H1 (cell line): ENCODE measurements at regions of chr12 and their contacts with region 1.

Region 1: DNA sequence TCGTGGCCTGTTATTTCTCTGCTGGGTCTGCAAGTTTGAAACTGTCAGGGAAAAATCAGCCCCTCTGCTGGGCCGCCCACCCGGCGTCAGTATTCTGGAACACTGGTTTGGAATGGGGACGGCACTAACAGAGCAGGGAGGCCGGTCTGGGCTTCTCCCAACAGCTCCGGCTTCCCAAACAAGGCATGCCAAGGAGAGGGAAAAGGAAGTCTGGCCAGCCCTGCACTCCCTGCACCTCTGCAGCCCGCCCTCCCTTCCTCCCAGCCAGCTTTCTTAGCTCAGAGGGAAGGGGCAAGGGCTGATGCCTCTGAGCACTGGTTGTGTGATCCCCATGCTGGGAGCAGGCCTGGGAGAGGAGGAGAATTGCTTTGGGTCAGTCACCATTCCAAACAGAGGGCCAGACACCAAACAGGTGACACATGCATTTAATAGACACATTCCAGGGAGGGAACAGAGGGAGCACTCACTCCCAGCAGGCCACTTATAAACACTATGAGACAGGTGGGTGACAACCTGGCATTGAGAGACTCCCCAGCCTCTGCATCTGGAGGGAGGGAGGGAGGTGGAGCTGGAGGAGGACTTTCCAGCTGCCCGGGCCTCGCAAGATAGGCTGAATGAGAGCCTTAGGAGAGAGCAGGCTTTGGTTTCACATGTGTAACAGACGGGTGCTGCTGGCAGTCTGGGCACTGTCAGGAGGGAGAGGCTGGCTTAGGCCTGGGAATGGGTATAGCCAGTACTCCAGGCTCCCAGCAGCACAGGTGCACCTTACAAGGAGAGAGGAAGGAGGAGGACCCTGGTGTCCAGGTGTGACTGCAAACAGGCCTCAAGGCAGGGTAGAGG is 10.3 kb downstream of the KRT75 start:
- DNase-seq: no peak
- H3K4me3 ChIP-seq: no peak overlapping the region
- H3K27ac ChIP-seq: no peak overlapping the region
- H3K4me1 ChIP-seq: no peaks in the 10 kb centered on the region; a peak in 2 of 7 replicates
- H3K27me3 ChIP-seq: no peaks in the 10 kb centered on the region
- CTCF ChIP-seq: no peak
- EP300 ChIP-seq: no peak
- POLR2A ChIP-seq: no peak
- RAD21 ChIP-seq: no peak

Region 2: DNA sequence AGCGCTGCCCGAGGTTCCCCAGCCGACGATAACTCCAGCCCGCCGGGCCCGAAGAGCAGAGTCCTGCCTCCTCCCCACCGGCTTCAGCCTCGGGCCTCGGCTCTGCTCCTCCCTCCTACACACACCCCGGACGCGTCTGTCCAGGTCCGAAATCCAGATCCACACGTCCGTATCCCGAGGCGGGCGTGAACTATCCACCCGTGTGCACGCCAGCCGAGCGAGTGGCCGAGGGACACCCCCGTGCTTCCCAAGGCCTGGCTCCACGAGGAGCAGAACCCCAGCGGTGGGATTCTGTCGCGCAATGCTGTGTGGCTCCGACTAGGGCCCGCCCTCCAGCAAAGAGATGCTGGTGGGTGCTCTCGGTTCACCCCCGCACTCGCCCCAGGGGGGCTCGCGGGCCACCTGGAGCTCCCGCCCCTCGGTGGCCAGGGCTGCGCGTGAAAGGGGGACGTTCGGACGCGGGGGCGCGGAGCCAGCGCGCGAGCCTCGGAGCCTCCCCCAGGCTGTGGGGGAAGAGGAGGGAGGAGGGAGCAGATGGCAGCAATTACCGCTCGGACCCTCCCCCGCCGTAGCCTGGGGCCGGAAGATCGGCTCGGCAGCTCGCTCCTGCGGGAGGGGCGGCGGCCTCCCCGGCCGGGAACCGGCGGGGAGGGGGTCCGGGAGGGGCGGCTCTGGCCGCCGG is 554.9 kb before region 1 on chr12:
- CTCF ChIA-PET with region 1: no interaction called
- POLR2A ChIA-PET with region 1: no interaction called
- DNase-seq: peak in 1 of 2 experiments; percentile 70
- H3K4me3 ChIP-seq: peak overlapping the region; percentile 66 to 85 (median 72)
- H3K27ac ChIP-seq: no peak overlapping the region
- H3K4me1 ChIP-seq: peaks cover 15 to 48% (median 36%) of the 10 kb centered on the region in 4 experiments
- H3K27me3 ChIP-seq: peaks cover 0 to 29% (median 24%) of the 10 kb centered on the region in 4 experiments; a peak in 6 of 7 replicates
- CTCF ChIP-seq: no peak
- EP300 ChIP-seq: no peak
- POLR2A ChIP-seq: no peak
- RAD21 ChIP-seq: no peak

Region 3: DNA sequence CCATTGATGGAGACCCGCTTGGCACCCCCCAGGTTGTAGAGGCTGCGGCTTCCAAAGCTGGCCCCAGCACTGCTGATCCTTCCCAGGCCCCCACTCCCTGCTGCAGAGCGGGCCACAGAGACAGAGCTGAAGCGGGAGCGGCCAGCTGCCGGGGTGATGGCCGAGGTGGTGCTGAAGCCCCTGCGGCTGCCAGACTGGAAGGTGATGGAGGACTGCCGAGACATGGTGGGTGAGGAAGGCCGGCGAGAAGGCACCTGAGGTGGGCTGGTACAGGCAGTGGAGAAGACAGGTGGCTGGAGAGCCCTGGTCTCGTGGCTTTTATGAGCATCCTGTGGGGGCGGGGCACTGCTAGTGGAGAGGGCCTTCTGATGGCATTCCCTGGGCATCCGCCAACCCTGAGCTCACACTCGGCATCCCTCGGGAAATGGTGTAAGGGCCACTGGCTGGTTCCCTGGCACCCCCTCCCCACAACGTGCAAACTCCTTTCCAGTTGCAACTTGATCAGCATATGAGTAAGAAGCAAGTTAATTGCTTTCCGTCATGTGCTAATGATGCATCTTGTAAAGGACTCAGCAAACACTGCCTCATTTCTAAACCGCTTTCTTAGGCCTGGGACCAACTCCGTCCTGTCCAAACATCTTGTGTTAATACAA is 10.3 kb after region 1 on chr12 and contains the start of gene KRT75:
- CTCF ChIA-PET with region 1: interaction called, 12 read pairs
- POLR2A ChIA-PET with region 1: no interaction called
- DNase-seq: no peak
- H3K4me3 ChIP-seq: no peak within 1 kb of the TSS
- H3K27ac ChIP-seq: no peak within 1 kb of the TSS
- H3K4me1 ChIP-seq: no peaks in the 10 kb centered on the region
- H3K27me3 ChIP-seq: no peaks in the 10 kb centered on the region; a peak in 1 of 7 replicates
- CTCF ChIP-seq: no peak
- EP300 ChIP-seq: no peak
- POLR2A ChIP-seq: no peak
- RAD21 ChIP-seq: no peak
- total RNA-seq, gene KRT75: not detected in 2 replicates